ENCODE measurements at regions of chr17 and their contacts with region 1.

Region 1: GRCh38 chr17:45135192-45135977 is at the start of gene ACBD4:
- DNase-seq: peak; percentile 95
- H3K4me3 ChIP-seq: peak within 1 kb of the TSS; percentile 76
- H3K27ac ChIP-seq: peak within 1 kb of the TSS; percentile 31
- H3K27me3 ChIP-seq: no peaks in the 10 kb centered on the region
- CTCF ChIP-seq: peak; percentile 100
- polyA plus RNA-seq, gene ACBD4: 4.0 and 4.7 TPM in 2 replicates

Region 2: DNA sequence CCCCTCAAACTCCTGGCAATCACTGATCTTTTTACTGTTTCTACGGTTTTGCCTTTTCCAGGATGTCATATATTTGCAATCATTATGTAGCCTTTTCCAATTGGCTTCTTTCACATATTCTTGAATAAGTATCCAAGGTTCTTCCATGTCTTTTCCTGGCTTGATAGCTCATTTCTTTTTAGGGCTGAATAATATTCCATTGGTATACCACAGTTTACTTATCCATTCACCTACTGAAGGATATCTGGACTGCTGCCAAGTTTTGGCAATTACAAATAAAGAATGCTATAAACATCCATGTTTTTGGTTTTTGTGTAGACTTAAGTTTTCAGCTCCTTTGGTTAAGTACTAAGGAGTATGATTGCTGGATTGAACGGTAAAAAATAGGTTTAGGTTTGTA is 648.2 kb before region 1 on chr17:
- CTCF ChIA-PET with region 1: no interaction called
- POLR2A ChIA-PET with region 1: no interaction called
- DNase-seq: no peak
- H3K4me3 ChIP-seq: no peak overlapping the region
- H3K27ac ChIP-seq: no peak overlapping the region
- H3K27me3 ChIP-seq: no peaks in the 10 kb centered on the region
- CTCF ChIP-seq: no peak

Region 3: DNA sequence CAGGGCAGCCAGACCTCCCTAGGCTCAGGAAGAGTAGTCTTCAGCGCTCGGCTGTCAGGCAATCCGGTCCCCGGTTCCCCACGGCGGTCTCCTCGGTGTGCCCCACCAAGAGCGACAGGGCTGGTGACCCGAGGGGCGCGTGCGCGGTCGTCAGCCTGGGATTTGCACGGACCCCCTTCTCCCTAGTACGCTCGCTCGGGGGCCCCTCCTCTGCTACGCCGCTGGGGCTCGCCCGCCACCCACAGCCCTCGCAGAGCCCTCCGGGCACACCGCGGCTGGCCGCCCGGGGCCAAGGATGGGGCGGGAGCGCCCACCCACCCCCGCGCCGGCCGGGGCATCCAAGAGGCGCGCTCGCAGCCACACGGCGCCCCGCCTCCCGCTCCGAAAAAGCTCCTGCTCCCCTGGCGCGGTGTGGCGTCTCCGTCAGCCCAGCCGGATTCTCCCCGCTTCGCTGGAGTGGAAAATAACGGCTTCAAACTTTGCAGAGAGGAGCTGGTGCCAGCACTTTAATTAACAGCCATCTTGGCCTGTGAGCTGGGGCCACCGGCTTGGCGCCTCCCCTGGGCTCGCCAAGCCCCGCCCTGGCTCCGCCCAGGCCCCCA is 165.1 kb before region 1 on chr17:
- CTCF ChIA-PET with region 1: no interaction called
- POLR2A ChIA-PET with region 1: no interaction called
- DNase-seq: no peak
- H3K4me3 ChIP-seq: peak overlapping the region; percentile 54
- H3K27ac ChIP-seq: no peak overlapping the region
- H3K27me3 ChIP-seq: peaks cover 35% of the 10 kb centered on the region
- CTCF ChIP-seq: no peak

Region 4: DNA sequence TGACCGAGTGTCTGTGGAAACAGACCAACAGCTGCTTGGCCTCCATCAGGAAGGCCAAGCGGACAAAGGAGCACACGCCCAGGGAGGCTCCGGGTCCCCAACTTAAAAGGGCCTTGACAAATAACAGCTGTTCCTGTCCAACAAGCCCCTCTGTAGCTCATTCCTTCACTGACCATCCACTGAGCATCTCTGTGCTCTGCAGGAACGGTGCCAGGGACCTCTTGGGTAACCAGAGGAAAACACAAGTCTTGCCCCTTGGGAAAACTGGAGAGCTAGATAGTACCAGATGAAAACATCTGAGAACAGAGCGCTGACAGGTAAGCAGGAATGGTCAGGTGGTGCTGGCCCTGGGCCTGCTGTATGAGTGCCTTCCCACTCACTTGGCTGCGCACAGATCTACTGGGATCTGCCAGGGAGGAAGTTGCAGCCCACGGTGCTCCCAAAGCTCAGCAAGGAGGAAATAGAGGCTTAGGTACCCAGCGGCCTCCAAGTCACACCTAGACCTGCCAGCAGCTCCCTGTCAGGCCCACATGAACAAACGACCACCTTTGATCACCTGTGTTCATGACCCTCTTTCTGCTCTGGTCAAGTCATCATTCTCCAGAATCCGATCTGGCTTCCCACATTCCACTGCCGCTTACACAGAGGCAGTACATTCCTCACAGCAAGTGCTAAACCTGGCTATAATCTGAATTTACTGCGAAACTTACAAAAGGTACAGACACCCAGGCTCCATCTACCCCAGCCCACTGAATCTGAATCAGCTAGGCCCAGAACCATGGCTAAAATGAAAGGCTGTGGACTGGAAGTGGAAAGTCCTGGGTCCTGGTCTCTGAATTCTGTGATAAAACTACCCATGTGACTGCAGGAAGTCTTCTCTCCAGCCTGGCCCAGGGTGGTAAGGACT is 96.4 kb before region 1 on chr17:
- CTCF ChIA-PET with region 1: interaction called, 13 read pairs
- POLR2A ChIA-PET with region 1: interaction called, 5 read pairs
- DNase-seq: no peak
- H3K4me3 ChIP-seq: no peak overlapping the region
- H3K27ac ChIP-seq: no peak overlapping the region
- H3K27me3 ChIP-seq: no peaks in the 10 kb centered on the region
- CTCF ChIP-seq: no peak

Region 5: DNA sequence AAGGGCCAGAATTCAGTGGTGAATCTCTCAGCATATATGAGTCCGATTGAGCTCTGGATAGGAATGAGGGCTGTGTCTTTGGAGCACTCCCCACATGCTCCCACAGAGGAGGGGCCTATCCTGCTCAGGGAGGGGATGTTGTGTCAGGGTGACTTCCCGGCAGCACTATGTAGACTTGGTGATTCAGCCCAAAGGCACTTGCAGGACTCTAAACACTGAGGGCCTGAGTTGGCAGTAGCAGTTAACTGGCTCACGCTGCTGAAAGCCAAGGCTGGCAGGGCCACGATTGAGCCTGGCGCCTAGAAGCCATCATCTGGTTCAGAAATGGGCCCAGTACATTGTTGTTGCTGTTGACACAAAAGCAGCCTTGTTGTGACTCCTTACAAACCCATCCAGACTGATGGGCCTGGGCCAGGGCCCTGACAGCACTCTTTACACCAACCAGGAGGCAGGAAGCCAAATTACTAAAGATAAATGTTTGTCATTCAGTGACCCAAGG is 42.4 kb before region 1 on chr17:
- CTCF ChIA-PET with region 1: interaction called, 38 read pairs
- POLR2A ChIA-PET with region 1: no interaction called
- DNase-seq: peak; percentile 97
- H3K4me3 ChIP-seq: no peak overlapping the region
- H3K27ac ChIP-seq: peak overlapping the region; percentile 98
- H3K27me3 ChIP-seq: no peaks in the 10 kb centered on the region
- CTCF ChIP-seq: no peak

Region 6: DNA sequence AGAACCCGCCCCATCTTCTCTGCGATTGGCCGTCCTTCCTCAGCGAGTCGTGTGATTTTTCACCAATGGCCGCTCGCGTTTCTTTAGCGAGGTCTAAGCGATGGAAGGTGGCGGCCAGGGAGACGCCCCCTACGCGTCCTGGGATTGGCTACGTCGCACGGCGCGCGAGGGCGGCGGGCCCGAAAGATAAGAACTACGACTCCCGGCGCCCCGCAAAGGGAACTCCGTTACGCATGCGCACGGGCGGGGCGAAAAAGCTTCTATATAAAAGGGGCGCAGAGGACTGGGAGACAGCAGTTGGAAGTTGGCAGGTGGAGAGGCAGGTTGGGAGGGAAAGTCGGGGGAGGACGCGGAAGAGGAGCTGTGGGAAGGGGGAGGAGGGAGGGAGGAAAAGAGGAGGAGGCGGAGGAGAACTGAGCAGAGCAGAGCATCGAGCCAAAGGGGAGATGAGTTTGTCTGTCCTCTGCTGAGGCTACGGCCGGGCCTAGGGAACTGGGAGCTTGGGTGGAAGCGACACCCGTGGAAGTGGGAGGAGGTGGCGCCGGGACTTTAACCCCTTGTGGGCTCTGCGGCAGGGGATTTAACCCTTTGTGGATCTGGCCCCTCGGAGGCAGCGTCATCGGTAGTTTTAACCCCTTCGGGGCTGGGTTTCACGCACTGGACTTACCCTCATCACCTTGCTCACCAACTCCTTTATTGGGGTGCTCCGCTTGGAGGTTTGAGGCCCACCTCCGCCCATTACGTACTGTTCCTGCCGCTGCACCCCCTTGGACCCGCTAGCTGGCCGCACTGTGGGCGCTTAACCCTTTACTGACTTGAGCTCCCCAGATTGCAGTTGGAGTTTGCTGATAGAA is 13.0 kb after region 1 on chr17 and contains the start of gene HEXIM1:
- CTCF ChIA-PET with region 1: interaction called, 181 read pairs
- POLR2A ChIA-PET with region 1: interaction called, 110 read pairs
- DNase-seq: peak; percentile 99
- H3K4me3 ChIP-seq: peak within 1 kb of the TSS; percentile 96
- H3K27ac ChIP-seq: peak within 1 kb of the TSS; percentile 98
- H3K27me3 ChIP-seq: no peaks in the 10 kb centered on the region
- CTCF ChIP-seq: no peak
- polyA plus RNA-seq, gene HEXIM1: 12.4 and 13.2 TPM in 2 replicates

Region 7: GRCh38 chr17:45190503-45191255 is 55.3 kb after region 1 on chr17:
- CTCF ChIA-PET with region 1: interaction called, 420 read pairs
- POLR2A ChIA-PET with region 1: interaction called, 6 read pairs
- DNase-seq: no peak
- H3K4me3 ChIP-seq: no peak overlapping the region
- H3K27ac ChIP-seq: no peak overlapping the region
- H3K27me3 ChIP-seq: peaks cover 2% of the 10 kb centered on the region
- CTCF ChIP-seq: no peak

Region 8: GRCh38 chr17:45241328-45242011 is 106.1 kb after region 1 on chr17:
- CTCF ChIA-PET with region 1: interaction called, 31 read pairs
- POLR2A ChIA-PET with region 1: no interaction called
- DNase-seq: no peak
- H3K4me3 ChIP-seq: peak overlapping the region; percentile 41
- H3K27ac ChIP-seq: no peak overlapping the region
- H3K27me3 ChIP-seq: peaks cover 14% of the 10 kb centered on the region
- CTCF ChIP-seq: no peak